ENCODE measurements at regions of chr12 and their contacts with region 1.

Region 1: GRCh38 chr12:116319898-116320621 is 42.6 kb upstream of the MED13L start:
- DNase-seq: peak; percentile 70
- H3K4me3 ChIP-seq: no peak overlapping the region
- H3K27ac ChIP-seq: peak overlapping the region; percentile 60 to 81
- H3K4me1 ChIP-seq: peaks cover 2% of the 10 kb centered on the region
- H3K27me3 ChIP-seq: no peaks in the 10 kb centered on the region
- CTCF ChIP-seq: no peak
- POLR2A ChIP-seq: no peak

Region 2: DNA sequence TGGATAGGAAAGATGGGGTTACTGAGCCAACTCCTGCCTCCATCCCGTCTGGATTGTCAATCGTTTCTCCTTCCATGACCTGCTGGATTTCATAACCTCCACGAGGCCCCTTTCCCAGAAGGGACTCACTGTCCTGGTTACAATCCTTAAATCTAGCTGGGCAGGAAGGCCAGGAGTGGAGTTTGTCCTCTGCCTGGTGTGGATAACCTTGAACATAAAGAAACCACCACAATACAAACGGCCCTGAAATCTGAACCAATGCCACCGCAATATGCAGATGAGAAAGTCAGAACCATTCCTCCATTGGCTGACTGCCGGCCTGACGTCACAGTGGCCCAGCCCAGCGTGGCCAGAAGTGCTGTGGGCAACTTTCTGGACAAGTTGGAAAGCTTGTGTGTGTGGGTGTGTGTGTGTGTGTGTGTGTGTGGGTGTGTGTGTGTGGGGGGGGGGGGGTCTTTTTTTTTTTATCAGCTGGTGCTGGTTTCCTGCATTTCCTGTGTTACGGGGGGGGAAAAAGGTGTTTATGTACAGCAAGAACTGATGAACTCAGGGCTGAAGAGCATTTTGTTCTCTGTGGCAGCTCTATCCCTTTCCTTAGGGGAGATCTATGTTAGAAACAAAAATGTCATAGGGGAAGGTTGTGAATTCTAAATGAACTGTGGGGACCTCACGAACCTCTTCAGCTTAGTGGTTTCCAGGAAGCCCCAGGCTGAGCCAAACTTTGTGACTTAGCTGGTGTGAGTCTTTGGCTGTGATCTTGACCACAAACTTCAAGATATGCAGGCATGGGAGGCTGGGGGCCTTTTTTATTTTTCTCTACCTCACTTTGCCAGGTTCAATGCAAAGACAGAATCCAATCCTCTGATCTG is 39.1 kb after region 1 on chr12:
- intact Hi-C with region 1: loop called (anchors 5 kb)
- DNase-seq: peak; percentile 96
- H3K4me3 ChIP-seq: no peak overlapping the region
- H3K27ac ChIP-seq: peak overlapping the region; percentile 71 to 79
- H3K4me1 ChIP-seq: no peaks in the 10 kb centered on the region
- H3K27me3 ChIP-seq: no peaks in the 10 kb centered on the region
- CTCF ChIP-seq: no peak
- POLR2A ChIP-seq: peak; percentile 19

Measured in prostate gland (tissue), 2 donors.